Activated naive CD4-positive, alpha-beta T cell treated with anti-CD3 and anti-CD28 coated beads for 36 hours (primary cell): ENCODE measurements at regions of chr4 and their contacts with region 1.

Region 1: GRCh38 chr4:40228497-40229365 is 31.9 kb downstream of the RHOH start:
- DNase-seq: peak; percentile 24
- H3K4me3 Mint-ChIP-seq: peak overlapping the region; percentile 53
- H3K27ac Mint-ChIP-seq: peak overlapping the region; percentile 85
- H3K4me1 Mint-ChIP-seq: peaks cover 94% of the 10 kb centered on the region
- H3K27me3 Mint-ChIP-seq: no peaks in the 10 kb centered on the region

Region 2: GRCh38 chr4:40149960-40150385 is 78.8 kb before region 1 on chr4:
- CTCF ChIA-PET with region 1: interaction called, 3 read pairs
- intact Hi-C with region 1: loop called (anchors 1 kb)
- DNase-seq: peak; percentile 86
- H3K4me3 Mint-ChIP-seq: no peak overlapping the region
- H3K27ac Mint-ChIP-seq: peak overlapping the region; percentile 70
- H3K4me1 Mint-ChIP-seq: peaks cover 36% of the 10 kb centered on the region
- H3K27me3 Mint-ChIP-seq: no peaks in the 10 kb centered on the region

Region 3: DNA sequence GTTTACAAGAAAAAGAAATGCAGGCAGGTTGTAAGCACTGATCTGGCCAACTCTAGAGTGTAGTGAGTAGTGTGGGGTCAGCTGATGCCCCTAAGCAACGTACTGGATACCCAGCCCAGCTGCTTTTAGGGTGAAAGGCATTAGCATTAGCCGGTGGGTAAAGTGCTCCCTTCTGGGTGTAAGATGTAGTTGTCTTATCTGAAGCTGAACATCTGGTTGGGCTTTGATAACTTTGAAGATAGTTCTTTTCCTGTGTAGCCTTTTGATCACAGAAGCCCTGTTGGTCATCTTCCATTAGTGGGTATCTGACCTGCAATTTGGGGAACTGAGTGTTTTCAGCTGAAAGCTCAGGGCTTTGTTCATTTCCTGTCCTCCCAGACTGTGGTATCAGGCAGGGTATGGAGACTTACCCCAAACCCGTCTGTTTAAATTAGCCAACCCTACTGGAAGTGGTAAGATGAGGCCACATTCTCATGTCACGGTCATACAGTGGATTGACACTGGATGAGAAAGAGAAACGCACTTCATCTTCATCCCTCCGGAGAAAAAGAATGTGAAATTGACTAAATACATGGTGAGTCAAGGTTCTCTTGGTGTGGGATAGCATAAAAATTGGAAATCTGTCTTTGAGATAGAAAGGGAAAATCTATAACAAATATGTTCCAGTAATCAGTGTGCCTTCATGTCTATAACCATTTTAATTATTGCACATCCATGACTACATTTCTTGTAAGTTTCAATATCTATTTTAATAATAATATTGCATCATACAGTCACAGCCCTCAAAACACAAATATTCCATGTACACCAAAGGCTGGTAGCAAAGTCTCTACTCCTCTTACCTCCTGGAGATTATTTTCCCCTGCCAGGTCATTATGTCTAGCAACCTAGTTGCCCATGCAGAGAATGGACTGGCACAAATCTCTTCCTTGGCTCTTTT is 23.2 kb before region 1 on chr4:
- CTCF ChIA-PET with region 1: interaction called, 13 read pairs
- intact Hi-C with region 1: loop called (anchors 1 kb)
- DNase-seq: peak; percentile 68
- H3K4me3 Mint-ChIP-seq: peak overlapping the region; percentile 85
- H3K27ac Mint-ChIP-seq: peak overlapping the region; percentile 98
- H3K4me1 Mint-ChIP-seq: peaks cover 51% of the 10 kb centered on the region
- H3K27me3 Mint-ChIP-seq: no peaks in the 10 kb centered on the region

Region 4: DNA sequence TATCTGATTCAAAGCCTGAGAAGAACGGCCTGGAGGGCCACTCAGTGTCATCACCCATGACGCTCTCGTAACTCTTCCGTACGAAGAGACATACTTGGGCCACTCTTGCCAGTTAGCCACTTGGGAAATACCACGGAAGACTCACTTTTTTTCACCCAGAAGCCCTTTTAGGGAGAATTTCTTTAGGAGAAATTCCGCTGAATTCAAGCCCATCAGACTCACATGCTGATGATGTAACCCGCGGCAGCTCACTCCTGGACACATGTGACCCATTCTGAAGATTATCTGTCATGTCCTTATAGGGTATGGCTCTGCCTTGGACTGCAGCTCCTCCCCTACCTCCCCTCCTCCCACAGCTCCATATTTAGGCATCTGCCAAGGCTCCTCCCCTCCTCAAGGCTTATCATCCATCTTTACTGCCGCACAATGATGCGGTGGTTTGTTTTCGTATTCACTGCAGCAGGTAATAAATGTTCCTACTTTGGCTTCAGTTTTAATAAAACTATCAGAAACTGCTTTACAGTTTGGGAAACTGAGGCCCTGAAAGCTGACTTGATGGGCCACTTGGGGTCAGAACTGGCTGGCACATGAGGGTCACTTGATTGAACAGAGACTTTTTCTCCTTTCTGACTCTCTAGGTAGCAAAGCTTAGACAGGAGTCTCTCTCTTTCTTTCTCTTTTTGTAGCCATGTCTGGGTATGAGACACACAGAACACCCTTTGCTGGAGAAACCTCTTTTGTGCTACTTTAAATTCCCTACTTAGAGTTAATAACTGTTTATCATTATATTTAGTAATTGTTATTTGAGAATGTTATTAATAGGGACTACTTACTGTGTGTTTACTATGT is 10.2 kb after region 1 on chr4:
- CTCF ChIA-PET with region 1: interaction called, 23 read pairs
- intact Hi-C with region 1: loop called (anchors 1 kb)
- DNase-seq: peak; percentile 90
- H3K4me3 Mint-ChIP-seq: peak overlapping the region; percentile 74
- H3K27ac Mint-ChIP-seq: peak overlapping the region; percentile 89
- H3K4me1 Mint-ChIP-seq: peaks cover 91% of the 10 kb centered on the region
- H3K27me3 Mint-ChIP-seq: no peaks in the 10 kb centered on the region

Region 5: DNA sequence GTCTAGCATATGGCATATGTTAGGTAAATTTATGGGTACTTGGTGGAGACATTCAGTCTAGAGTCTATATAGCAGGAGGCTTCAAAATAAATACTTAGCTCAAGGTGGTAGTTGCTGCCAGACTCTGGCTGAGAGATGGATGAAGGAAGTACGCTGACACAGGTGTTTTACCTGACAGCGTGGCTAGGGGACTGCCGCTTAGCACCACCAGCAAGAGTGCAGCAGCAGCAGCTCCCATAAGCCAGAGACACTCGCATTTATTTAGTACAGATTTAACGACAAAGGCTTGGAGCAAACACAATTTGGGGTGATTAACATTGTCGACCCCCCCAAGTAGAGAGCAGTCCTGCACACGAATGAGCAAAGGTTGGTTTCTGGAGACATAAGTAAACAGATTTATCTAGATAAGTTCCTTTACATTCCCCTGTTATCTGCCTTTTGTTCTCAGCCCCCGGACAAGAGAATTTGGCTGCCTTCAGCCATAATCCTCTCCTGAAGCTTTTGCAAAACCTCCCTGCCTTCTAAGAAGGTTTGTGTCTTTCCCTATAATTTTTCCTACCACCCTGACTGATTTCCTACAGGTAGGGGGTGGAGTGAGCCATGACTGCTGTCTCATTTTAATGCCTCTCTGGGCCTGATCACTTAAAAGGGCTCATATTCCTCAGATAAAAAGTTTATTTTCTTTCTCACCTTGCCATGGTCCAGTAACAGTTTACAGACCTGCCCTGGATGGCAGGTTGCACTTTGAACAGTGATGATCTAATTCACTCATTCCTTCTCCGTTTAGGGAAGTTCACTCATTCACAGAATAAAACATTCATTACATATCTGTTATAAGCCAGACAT is 32.7 kb after region 1 on chr4:
- CTCF ChIA-PET with region 1: interaction called, 3 read pairs
- intact Hi-C with region 1: loop called (anchors 1 kb)
- DNase-seq: no peak
- H3K4me3 Mint-ChIP-seq: no peak overlapping the region
- H3K27ac Mint-ChIP-seq: peak overlapping the region; percentile 74
- H3K4me1 Mint-ChIP-seq: peaks cover 81% of the 10 kb centered on the region
- H3K27me3 Mint-ChIP-seq: no peaks in the 10 kb centered on the region

Region 6: GRCh38 chr4:40316782-40317635 is 88.3 kb after region 1 on chr4:
- CTCF ChIA-PET with region 1: interaction called, 36 read pairs
- intact Hi-C with region 1: loop called (anchors 1 kb)
- DNase-seq: peak; percentile 71
- H3K4me3 Mint-ChIP-seq: peak overlapping the region; percentile 86
- H3K27ac Mint-ChIP-seq: peak overlapping the region; percentile 100
- H3K4me1 Mint-ChIP-seq: peaks cover 49% of the 10 kb centered on the region
- H3K27me3 Mint-ChIP-seq: no peaks in the 10 kb centered on the region

Region 7: DNA sequence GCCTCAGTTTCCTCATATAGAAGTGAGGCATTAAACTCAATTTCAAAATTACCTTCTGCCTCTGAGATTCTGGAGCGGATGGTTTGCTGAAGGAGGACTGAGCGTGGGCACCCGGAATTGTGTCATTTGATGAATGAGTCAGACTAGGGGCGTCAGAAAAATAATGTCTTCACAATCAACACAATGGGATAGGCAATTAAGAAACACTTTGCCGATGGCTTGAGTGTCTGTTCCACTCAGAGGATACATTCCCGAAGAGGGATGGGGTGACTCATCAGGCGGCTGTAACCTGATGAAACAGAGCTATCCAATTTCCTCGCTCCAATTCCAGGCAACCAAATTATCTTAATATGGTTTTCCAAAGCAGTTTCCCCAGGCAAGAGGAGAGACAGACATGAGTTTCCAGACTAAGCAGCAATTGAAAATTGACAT is 105.2 kb after region 1 on chr4:
- CTCF ChIA-PET with region 1: no interaction called
- intact Hi-C with region 1: no loop called
- DNase-seq: no peak
- H3K4me3 Mint-ChIP-seq: no peak overlapping the region
- H3K27ac Mint-ChIP-seq: no peak overlapping the region
- H3K4me1 Mint-ChIP-seq: no peaks in the 10 kb centered on the region
- H3K27me3 Mint-ChIP-seq: no peaks in the 10 kb centered on the region